ENCODE measurements at regions of chr1 and their contacts with region 1.

Region 1: DNA sequence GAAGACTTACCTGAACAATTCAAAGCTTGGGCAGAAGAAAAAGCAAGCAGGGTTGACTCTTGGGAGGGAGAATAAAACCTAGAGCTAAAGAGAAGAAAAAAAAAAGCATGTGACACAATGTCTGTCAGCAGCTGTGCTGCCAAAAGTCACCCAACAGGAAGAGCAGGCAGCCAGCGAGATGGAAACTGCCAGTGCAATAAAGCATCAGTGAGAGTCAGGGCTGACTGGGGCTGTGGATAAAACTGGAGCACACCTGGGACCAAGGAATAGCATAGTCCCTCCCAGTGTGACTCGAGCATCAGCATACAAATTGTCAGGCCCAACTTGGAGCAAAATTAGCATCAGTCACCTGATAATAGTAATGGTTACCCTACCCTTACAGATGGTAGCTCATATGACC is 65.0 kb upstream of the SLC22A15 start:
- DNase-seq: no peak

Region 2: DNA sequence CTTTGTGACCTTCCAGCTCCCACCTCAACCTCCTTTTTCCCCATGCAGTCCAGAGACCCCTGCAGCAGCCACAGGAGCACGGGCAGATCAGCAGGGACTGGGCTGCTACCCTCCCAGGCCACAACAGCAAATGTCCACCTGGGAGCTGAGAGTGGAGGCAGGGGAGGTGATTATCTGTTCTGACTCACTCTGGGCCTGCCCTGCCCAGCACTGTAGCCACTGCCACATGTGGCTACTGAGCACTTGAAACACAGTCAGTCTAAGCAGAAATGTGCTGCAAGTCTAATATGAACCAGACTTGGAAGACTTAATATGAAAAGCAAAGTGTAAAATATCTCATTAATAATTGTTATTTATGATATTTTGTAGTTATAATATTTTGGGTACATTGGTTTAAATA is 418.4 kb before region 1 on chr1:
- in situ Hi-C with region 1: no loop called
- DNase-seq: no peak

Region 3: GRCh38 chr1:115624859-115625258 is 286.5 kb before region 1 on chr1:
- in situ Hi-C with region 1: loop called (anchors 25 kb)
- DNase-seq: no peak

Region 4: GRCh38 chr1:115796897-115797296 is 114.4 kb before region 1 on chr1:
- in situ Hi-C with region 1: no loop called
- DNase-seq: no peak

Region 5: GRCh38 chr1:116570358-116571200 is 659.3 kb after region 1 on chr1 and contains the start of gene CD58:
- in situ Hi-C with region 1: no loop called
- DNase-seq: peak; percentile 88

Measured in KBM-7 (cell line).